Activated CD8-positive, alpha-beta memory T cell treated with anti-CD3 and anti-CD28 coated beads, Interleukin-2, amount 10 ng/mL, durations not matched to agents 7 days and 5 days (primary cell): ENCODE measurements at regions of chr3 and their contacts with region 1.

Region 1: GRCh38 chr3:197711973-197712707 is 24.6 kb downstream of the RUBCN start:
- DNase-seq: peak; percentile 95
- ATAC-seq: peak; percentile 100
- H3K4me3 Mint-ChIP-seq: peak overlapping the region; percentile 77
- H3K27ac Mint-ChIP-seq: peak overlapping the region; percentile 100
- H3K4me1 Mint-ChIP-seq: peaks cover 36% of the 10 kb centered on the region
- H3K27me3 Mint-ChIP-seq: no peaks in the 10 kb centered on the region

Region 2: GRCh38 chr3:197725524-197725923 is 13.4 kb after region 1 on chr3:
- CTCF ChIA-PET with region 1: interaction called, 15 read pairs
- DNase-seq: no peak
- ATAC-seq: no peak
- H3K4me3 Mint-ChIP-seq: no peak overlapping the region
- H3K27ac Mint-ChIP-seq: no peak overlapping the region
- H3K4me1 Mint-ChIP-seq: peaks cover 4% of the 10 kb centered on the region
- H3K27me3 Mint-ChIP-seq: no peaks in the 10 kb centered on the region

Region 3: DNA sequence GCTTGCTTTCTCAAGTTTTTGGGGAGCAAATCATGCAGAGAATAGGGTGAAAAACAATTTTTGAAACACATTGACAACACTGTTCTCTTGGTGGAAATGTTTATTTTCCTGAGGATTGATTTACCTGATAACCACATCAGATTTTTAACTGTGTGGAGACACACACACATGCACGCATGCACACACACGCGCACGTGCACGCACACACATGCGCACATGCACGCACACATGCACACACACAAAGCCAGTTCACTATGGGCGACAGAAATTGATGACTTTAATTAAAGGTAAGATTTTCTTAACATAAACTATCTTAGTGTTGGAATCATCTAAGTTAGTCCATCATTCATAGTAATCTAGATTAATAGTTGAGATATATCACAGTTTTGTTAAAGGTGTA is 263.2 kb after region 1 on chr3:
- CTCF ChIA-PET with region 1: no interaction called
- DNase-seq: no peak
- ATAC-seq: no peak
- H3K4me3 Mint-ChIP-seq: no peak overlapping the region
- H3K27ac Mint-ChIP-seq: no peak overlapping the region
- H3K4me1 Mint-ChIP-seq: no peaks in the 10 kb centered on the region
- H3K27me3 Mint-ChIP-seq: no peaks in the 10 kb centered on the region